B cell (primary cell): ENCODE measurements at regions of chr9 and their contacts with region 1.

Region 1: GRCh38 chr9:128881901-128882681 is at the starts of genes KYAT1 and LRRC8A:
- DNase-seq: peak; percentile 97
- ATAC-seq: peak; percentile 92
- H3K4me3 ChIP-seq: peak within 1 kb of the TSS; percentile 88 to 95 (median 91)
- H3K4me3 Mint-ChIP-seq: peak within 1 kb of the TSS; percentile 98
- H3K27ac ChIP-seq: peak within 1 kb of the TSS; percentile 51 to 83
- H3K27ac Mint-ChIP-seq: peak within 1 kb of the TSS; percentile 99
- H3K4me1 ChIP-seq: peaks cover 15 to 37% of the 10 kb centered on the region in 2 donors
- H3K4me1 Mint-ChIP-seq: peaks cover 38% of the 10 kb centered on the region
- H3K27me3 ChIP-seq: no peaks in the 10 kb centered on the region
- H3K27me3 Mint-ChIP-seq: no peaks in the 10 kb centered on the region
- CTCF ChIP-seq: peak; percentile 26
- total RNA-seq, gene KYAT1: 6.4 and 7.0 TPM in 2 replicates
- total RNA-seq, gene LRRC8A: 14.5 and 15.1 TPM in 2 replicates

Region 2: DNA sequence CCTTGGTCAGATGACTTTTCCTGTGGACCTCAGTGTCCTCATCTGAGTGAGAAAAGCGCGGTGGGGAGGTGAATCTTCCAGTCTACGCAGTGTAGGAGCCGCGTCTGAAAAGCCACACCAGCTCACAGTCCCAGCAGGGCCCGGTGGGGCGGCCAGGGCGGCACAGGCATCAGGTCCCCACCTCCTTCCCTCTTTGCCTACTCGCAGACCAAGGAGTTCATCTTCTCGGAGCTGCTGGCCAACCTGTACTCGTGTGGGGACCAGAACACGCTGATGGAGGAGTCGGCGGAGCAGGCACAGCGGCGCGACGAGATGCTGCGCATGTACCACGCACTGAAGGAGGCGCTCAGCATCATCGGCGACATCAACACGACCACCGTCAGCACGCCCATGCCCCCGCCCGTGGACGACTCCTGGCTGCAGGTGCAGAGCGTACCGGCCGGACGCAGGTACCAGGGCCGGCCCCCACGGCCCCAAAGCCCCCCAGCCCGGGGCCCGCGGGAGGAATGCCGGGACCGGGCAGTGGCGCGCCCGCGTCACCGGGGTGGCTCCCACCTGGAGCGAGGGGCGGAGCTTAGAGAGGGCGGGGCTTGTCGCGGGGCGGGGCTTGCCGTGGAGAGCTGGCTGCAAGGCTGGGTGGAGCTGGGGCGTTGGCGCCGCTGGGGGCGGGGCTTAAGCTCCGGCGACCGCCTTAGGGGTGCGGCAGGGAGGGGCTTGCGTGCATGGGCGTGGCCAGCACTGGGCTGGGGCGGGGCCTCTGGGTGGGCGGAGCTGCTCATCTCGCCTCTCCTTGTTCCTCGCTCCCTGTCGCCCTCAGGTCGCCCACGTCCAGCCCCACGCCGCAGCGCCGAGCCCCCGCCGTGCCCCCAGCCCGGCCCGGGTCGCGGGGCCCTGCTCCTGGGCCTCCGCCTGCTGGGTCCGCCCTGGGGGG is 631.9 kb before region 1 on chr9:
- CTCF ChIA-PET with region 1: no interaction called
- POLR2A ChIA-PET with region 1: no interaction called
- intact Hi-C with region 1: loop called (anchors 5 kb)
- DNase-seq: peak; percentile 97
- ATAC-seq: peak; percentile 98
- H3K4me3 ChIP-seq: peak overlapping the region in 4 of 5 experiments; percentile 47 to 74 (median 60)
- H3K4me3 Mint-ChIP-seq: peak overlapping the region; percentile 93
- H3K27ac ChIP-seq: peak overlapping the region; percentile 53 to 63
- H3K27ac Mint-ChIP-seq: peak overlapping the region; percentile 92
- H3K4me1 ChIP-seq: peaks cover 10 to 26% of the 10 kb centered on the region in 2 donors
- H3K4me1 Mint-ChIP-seq: peaks cover 33% of the 10 kb centered on the region
- H3K27me3 ChIP-seq: peaks cover 0 to 4% (median 0%) of the 10 kb centered on the region in 4 experiments
- H3K27me3 Mint-ChIP-seq: peaks cover 17% of the 10 kb centered on the region
- CTCF ChIP-seq: no peak

Region 3: DNA sequence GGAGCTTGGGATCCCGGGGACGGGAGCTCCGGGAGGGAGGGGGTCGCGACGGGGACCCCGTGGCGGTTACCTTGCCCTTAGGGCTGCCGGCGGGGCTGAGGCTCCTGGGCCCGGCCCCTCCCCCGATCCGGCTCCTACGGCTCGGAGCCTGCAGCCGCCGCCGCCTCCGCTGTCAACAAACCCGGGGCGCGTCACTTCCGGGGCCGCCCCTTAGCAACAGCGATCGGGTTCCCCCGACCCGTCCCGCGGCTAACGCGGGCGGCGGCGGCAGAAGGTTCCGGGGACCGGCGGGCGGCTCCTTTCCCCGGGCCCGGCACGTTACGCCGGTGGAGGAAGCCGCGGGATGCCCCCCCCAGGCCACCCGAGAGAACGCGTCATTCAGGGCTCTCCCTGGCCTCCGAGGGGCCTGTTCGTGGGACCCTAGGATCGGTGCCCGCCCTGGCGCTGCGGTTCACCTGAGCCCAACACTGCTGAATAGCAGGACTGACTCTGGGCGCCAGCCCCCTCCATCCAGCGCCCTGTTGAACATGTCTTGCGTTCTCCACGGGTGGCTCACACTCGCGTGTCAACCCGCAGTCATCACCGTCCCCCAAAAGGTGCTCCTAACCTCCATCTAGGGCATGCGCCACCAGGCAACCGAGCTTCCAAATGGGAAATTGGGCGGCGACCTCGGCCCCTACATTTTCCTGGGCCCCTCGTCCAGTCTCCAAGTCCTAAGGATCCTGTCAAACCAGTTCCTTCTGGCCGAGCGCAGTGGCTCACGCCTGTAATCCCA is 110.2 kb before region 1 on chr9 and contains the start of gene ZER1:
- CTCF ChIA-PET with region 1: no interaction called
- POLR2A ChIA-PET with region 1: no interaction called
- intact Hi-C with region 1: loop called (anchors 1 kb)
- DNase-seq: peak; percentile 95
- ATAC-seq: peak; percentile 93
- H3K4me3 ChIP-seq: peak within 1 kb of the TSS; percentile 69 to 96 (median 77)
- H3K4me3 Mint-ChIP-seq: peak within 1 kb of the TSS; percentile 97
- H3K27ac ChIP-seq: peak within 1 kb of the TSS; percentile 86 to 93
- H3K27ac Mint-ChIP-seq: peak within 1 kb of the TSS; percentile 96
- H3K4me1 ChIP-seq: peaks cover 9 to 19% of the 10 kb centered on the region in 2 donors
- H3K4me1 Mint-ChIP-seq: peaks cover 25% of the 10 kb centered on the region
- H3K27me3 ChIP-seq: no peaks in the 10 kb centered on the region
- H3K27me3 Mint-ChIP-seq: no peaks in the 10 kb centered on the region
- CTCF ChIP-seq: no peak
- total RNA-seq, gene ZER1: 42.2 and 44.0 TPM in 2 replicates

Region 4: DNA sequence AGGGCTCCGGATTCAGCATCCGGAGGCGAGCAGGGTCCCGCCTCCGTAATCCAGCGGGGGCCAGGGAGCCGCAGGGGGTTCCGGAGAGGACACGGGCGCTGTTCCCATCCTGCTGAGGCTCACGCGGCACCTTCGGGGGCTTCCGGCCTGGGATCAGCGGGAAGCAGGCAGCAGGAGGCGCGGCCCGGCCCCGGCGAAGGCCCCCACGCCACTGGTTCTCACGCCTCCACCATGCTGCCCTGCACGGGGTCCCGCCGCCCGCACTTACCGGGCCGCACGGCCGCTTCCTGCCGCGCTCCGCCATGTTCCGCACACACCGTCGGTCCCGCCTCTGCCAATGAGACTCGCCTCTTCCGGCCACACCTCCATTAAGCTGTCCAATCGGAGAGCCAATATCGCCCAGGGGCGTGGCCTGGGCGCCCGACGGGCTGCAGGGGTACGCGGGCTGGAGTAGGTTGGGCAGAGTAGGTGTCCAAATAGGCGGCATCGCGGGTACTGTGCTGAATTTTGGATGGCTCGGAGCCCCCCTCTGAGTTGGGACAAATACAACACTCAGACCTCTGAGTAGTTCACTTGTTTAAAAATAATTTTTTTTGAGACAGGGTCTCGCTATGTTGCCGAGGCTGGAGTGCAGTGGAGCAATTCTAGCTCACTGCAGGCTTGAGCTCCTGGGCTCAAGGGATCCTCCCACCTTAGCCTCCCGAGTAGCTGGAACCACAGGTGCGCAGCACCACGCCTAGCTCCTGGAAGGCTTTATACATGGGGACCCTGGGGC is 52.4 kb before region 1 on chr9 and contains the start of gene SPOUT1:
- CTCF ChIA-PET with region 1: no interaction called
- POLR2A ChIA-PET with region 1: no interaction called
- intact Hi-C with region 1: loop called (anchors 1 kb)
- DNase-seq: peak; percentile 95
- ATAC-seq: peak; percentile 99
- H3K4me3 ChIP-seq: peak within 1 kb of the TSS; percentile 43 to 97 (median 91)
- H3K4me3 Mint-ChIP-seq: peak within 1 kb of the TSS; percentile 97
- H3K27ac ChIP-seq: peak within 1 kb of the TSS; percentile 42 to 74
- H3K27ac Mint-ChIP-seq: peak within 1 kb of the TSS; percentile 95
- H3K4me1 ChIP-seq: peaks cover 12 to 17% of the 10 kb centered on the region in 2 donors
- H3K4me1 Mint-ChIP-seq: peaks cover 19% of the 10 kb centered on the region
- H3K27me3 ChIP-seq: no peaks in the 10 kb centered on the region
- H3K27me3 Mint-ChIP-seq: no peaks in the 10 kb centered on the region
- CTCF ChIP-seq: no peak
- total RNA-seq, gene SPOUT1: 70.0 and 73.0 TPM in 2 replicates

Region 5: DNA sequence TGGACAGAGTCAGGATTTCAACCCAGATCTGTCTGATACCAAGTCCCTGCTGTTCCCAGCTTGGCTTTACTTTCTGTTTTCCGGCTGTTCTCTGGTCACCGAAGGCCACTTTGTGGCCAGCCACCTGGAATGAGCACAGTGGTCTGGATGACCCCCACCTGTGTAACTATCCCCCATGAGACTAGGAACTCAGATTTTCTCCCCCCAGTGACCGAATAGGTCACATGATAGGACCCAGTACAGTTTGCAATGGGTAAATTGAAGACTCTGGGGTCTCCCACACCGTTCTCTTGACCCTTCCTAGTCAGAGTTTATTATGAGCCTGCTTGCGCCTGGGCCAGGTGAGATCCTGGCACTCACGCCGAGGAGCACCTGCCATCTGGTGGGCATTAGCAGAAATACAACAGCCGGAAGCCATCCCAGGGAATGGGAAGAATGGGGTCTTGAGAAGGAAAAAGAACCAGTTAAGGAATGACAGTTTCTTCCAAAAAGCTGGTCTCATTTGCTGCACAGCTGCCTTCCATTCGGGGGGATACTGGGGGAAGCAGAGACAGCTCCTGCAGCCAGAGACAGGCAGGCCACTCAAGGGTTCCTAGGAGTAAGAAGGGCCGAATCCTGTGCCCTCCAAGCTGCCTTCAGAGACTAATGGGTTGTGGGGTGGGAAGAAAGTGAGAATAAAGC is 45.8 kb after region 1 on chr9:
- CTCF ChIA-PET with region 1: interaction called, 10 read pairs
- POLR2A ChIA-PET with region 1: no interaction called
- intact Hi-C with region 1: loop called (anchors 5 kb)
- DNase-seq: peak; percentile 70
- ATAC-seq: peak; percentile 82
- H3K4me3 ChIP-seq: no peak overlapping the region
- H3K4me3 Mint-ChIP-seq: no peak overlapping the region
- H3K27ac ChIP-seq: no peak overlapping the region
- H3K27ac Mint-ChIP-seq: no peak overlapping the region
- H3K4me1 ChIP-seq: peaks cover 0 to 4% of the 10 kb centered on the region in 2 donors
- H3K4me1 Mint-ChIP-seq: peaks cover 6% of the 10 kb centered on the region
- H3K27me3 ChIP-seq: no peaks in the 10 kb centered on the region
- H3K27me3 Mint-ChIP-seq: peaks cover 2% of the 10 kb centered on the region
- CTCF ChIP-seq: peak; percentile 90

Region 6: DNA sequence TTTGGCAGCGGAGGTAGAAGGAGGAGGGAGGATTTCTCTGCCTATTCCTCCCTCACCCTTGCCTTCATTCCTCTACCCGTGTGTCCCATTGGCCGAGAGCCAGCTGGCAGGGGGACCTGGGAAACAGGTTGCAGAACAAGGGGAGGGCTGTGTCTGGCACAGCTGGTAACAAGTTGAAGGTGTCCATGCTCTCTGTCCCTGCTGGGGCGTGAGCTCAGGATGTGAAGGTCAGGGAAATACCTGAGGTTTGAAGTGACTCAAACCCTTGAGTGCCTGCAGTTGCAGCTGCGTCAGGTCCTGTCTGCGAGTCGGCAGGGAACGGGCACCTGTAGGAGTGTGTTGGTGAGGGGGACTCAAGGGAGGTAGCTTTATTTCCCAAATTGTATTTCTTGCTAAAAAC is 170.5 kb after region 1 on chr9:
- CTCF ChIA-PET with region 1: no interaction called
- POLR2A ChIA-PET with region 1: no interaction called
- intact Hi-C with region 1: no loop called
- DNase-seq: no peak
- ATAC-seq: no peak
- H3K4me3 ChIP-seq: no peak overlapping the region
- H3K4me3 Mint-ChIP-seq: no peak overlapping the region
- H3K27ac ChIP-seq: no peak overlapping the region
- H3K27ac Mint-ChIP-seq: no peak overlapping the region
- H3K4me1 ChIP-seq: no peaks in the 10 kb centered on the region
- H3K4me1 Mint-ChIP-seq: no peaks in the 10 kb centered on the region
- H3K27me3 ChIP-seq: no peaks in the 10 kb centered on the region
- H3K27me3 Mint-ChIP-seq: no peaks in the 10 kb centered on the region
- CTCF ChIP-seq: no peak

Region 7: DNA sequence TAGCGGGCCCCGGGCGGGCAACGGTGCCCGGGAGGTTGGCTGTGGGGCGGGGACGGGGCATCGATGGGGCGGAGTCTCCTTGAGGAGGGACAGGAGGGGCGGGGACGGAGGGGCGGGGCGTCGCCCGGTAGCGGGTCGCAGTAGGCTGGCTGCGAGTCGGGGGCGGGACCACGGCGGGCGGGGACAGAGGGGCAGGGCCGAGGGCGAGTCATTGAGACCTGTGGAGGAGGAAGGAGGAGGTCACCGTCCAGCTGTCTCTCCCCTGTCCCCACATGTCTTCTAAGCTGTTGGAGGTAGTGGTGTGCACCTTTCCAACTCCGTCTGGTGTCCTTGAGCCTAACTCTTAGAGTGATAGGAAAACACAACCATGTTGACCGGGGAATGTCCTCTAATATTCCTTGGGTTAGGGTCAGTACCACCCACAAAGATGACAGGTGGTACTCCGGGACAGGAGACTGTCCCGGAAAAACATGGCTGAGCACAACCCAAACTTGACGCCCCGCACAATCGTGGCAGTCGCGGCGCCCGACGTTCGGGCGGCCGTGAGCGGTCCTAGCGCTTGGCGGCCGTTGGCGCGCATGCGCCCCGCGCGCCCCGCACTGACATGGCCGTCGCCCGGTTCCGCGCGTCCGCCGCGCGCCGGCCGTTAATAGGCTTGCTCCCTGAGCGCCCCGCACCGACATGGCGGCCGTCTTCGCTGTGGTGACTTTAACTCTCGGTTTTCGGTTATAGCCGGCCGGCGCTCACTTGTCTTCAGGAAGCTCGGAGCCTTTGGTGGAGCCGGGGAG is 228.8 kb after region 1 on chr9 and contains the starts of genes CRAT and PTPA:
- CTCF ChIA-PET with region 1: no interaction called
- POLR2A ChIA-PET with region 1: no interaction called
- intact Hi-C with region 1: no loop called
- DNase-seq: peak; percentile 96
- ATAC-seq: peak; percentile 88
- H3K4me3 ChIP-seq: peak within 1 kb of the TSS; percentile 92 to 98 (median 95)
- H3K4me3 Mint-ChIP-seq: peak within 1 kb of the TSS; percentile 96
- H3K27ac ChIP-seq: peak within 1 kb of the TSS; percentile 81 to 85
- H3K27ac Mint-ChIP-seq: peak within 1 kb of the TSS; percentile 96
- H3K4me1 ChIP-seq: peaks cover 12 to 19% of the 10 kb centered on the region in 2 donors
- H3K4me1 Mint-ChIP-seq: peaks cover 25% of the 10 kb centered on the region
- H3K27me3 ChIP-seq: no peaks in the 10 kb centered on the region
- H3K27me3 Mint-ChIP-seq: no peaks in the 10 kb centered on the region
- CTCF ChIP-seq: no peak
- total RNA-seq, gene CRAT: 11.8 and 14.1 TPM in 2 replicates
- total RNA-seq, gene PTPA: 72.8 and 73.9 TPM in 2 replicates